Esophagus muscularis mucosa (tissue), 4 donors: ENCODE measurements at regions of chr3 and their contacts with region 1.

Region 1: GRCh38 chr3:13495921-13496723 is 16.0 kb downstream of the HDAC11 start:
- DNase-seq: no peak
- H3K4me3 ChIP-seq: no peak overlapping the region
- H3K27ac ChIP-seq: peak overlapping the region; percentile 17 to 62 (median 50)
- H3K4me1 ChIP-seq: peaks cover 14 to 35% (median 19%) of the 10 kb centered on the region in 4 donors
- H3K27me3 ChIP-seq: no peaks in the 10 kb centered on the region
- CTCF ChIP-seq: peak; percentile 91 to 97 (median 96)
- EP300 ChIP-seq: no peak
- POLR2A ChIP-seq: no peak

Region 2: GRCh38 chr3:13385373-13385965 is 110.7 kb before region 1 on chr3:
- intact Hi-C with region 1: no loop called
- DNase-seq: no peak
- H3K4me3 ChIP-seq: no peak overlapping the region
- H3K27ac ChIP-seq: peak overlapping the region in 1 of 4 donors; percentile 16
- H3K4me1 ChIP-seq: peaks cover 0 to 7% (median 5%) of the 10 kb centered on the region in 4 donors
- H3K27me3 ChIP-seq: no peaks in the 10 kb centered on the region
- CTCF ChIP-seq: no peak
- EP300 ChIP-seq: no peak
- POLR2A ChIP-seq: no peak

Region 3: DNA sequence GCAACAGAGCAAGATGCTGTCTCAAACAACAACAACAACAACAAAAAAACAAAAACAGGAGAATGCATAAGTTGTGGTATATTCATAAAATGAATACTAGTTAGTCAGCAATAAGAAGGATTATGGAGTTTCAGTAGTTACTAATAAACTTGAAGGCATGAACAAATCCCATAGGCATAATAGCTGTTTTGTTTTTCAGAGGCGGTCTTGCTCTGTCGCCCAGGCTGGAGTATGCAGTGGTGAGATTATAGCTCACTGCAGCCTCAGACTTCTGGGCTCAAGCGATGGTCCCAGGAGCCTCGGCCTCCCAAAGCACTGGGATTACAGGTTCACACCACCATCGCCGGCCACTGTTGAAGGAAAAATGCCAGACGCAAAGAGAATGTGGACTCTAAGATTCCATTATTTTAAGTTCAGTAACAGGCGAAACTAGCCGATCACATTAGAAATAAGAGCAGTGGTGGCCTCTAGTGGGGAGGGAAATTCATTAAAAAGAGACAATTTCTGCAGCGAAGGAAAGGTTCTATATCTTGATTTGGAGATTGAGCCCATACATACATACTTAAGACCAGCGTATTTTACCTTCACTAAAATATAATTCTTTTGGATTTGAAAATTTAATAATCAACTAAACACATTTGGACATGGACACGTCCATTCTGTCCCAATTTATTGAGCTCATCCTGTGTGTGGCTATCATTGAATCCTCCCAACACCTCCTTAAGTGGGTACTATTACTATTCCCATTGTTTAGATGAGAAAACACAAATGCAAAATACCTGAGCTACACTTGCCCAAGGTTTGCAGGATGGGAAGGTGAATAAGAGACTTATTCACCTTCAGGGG is 43.4 kb before region 1 on chr3:
- intact Hi-C with region 1: no loop called
- DNase-seq: no peak
- H3K4me3 ChIP-seq: peak overlapping the region; percentile 55 to 66 (median 60)
- H3K27ac ChIP-seq: peak overlapping the region; percentile 77 to 88 (median 83)
- H3K4me1 ChIP-seq: peaks cover 10 to 15% (median 11%) of the 10 kb centered on the region in 4 donors
- H3K27me3 ChIP-seq: no peaks in the 10 kb centered on the region
- CTCF ChIP-seq: peak; percentile 59 to 70 (median 63)
- EP300 ChIP-seq: no peak
- POLR2A ChIP-seq: no peak

Region 4: DNA sequence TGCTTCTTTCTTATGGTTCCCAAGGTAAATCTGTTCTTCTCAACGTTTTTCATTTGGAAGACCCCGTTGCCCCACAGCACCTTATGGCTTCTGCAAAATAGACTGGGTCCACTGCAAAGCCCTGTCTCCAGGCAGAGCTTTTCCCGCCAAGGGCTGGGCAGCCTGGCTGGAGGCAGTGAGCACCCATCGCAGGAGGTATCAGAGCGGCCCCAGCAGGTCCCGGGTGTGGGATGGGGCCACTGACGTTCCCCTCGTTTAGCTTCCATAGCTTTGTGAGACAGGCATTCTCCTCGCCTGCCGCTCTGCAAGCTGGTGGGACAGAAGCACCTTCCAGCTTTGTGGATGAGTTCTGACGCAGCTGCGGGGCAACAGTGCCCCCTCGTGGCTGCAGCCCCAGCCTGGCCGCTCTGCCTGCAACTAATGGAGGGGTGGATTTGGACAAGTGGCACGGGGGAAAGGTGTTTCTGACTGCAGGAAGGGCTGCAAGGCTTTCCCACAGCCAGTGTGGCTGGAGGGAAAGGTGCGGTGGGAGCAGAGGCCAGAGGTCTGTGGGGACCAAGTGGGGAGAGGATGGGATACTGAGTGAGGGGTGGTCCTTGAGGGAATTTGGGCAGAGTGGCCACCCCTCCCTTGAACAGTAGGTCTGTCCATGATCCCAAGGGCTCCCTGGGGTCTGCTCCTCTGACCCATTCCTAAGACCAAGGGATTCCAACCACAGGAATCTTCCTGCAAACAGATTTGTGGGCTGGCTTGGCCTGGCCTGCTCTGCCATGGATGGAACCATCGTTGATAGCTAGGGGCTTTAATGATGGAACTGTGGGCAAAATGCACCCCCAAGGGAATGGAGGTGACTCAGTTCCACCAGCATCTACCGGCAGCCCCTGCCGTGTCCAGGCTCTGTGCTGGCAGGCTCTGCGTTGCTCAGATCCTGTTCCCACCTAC is 152.2 kb after region 1 on chr3:
- intact Hi-C with region 1: loop called (anchors 2 kb)
- DNase-seq: peak; percentile 93
- H3K4me3 ChIP-seq: peak overlapping the region in 1 of 4 donors; percentile 24
- H3K27ac ChIP-seq: no peak overlapping the region
- H3K4me1 ChIP-seq: peaks cover 15 to 27% (median 25%) of the 10 kb centered on the region in 4 donors
- H3K27me3 ChIP-seq: peaks cover 0 to 27% (median 7%) of the 10 kb centered on the region in 4 donors
- CTCF ChIP-seq: peak in 2 of 3 experiments; percentile 89 to 95
- EP300 ChIP-seq: no peak
- POLR2A ChIP-seq: no peak

Region 5: DNA sequence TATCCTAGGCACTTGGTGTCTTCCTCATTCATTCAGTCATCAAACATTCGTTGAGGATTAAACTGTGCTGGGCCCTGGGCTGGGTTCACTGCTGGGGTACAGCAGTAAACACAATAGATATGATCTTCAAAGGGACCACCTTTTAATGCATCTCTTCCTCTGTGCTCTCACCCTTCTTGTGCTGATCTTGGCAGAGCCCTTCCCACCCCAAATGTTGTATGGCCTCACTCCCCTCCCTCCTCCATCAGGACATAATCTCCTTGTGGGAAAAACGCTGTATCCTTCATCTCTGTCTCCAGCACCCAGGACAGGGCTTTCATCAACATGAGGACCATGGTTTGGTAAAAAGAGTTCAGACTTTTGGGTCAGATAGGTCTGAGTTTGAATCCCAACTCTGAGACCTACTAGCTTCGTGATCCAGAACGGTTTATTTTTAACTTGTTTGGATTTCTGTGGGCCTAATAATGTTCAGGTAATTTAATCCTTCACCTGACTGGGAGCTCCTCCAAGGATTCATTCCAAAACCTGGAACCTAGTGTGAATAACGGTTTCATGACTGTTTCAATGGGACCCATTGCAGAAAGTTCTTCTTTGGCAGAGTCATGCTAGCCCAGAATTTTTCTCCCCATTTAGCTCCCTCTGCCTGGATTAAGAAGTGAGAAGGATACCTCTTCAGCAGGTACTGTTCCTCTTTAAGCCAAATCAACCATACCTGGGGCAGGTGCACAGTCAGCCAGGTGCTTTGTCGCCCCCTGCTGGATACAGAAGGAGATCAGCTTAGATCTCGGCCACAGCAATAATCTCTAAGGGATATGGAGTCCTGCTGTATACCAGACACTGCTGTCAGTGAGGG is 389.0 kb after region 1 on chr3:
- intact Hi-C with region 1: loop called (anchors 10 kb)
- DNase-seq: peak; percentile 81
- H3K4me3 ChIP-seq: no peak overlapping the region
- H3K27ac ChIP-seq: no peak overlapping the region
- H3K4me1 ChIP-seq: peaks cover 8 to 9% (median 8%) of the 10 kb centered on the region in 4 donors
- H3K27me3 ChIP-seq: peaks cover 0 to 66% (median 16%) of the 10 kb centered on the region in 4 donors
- CTCF ChIP-seq: peak; percentile 9 to 38 (median 24)
- EP300 ChIP-seq: no peak
- POLR2A ChIP-seq: no peak